ENCODE measurements at regions of chr3 and their contacts with region 1.

Region 1: DNA sequence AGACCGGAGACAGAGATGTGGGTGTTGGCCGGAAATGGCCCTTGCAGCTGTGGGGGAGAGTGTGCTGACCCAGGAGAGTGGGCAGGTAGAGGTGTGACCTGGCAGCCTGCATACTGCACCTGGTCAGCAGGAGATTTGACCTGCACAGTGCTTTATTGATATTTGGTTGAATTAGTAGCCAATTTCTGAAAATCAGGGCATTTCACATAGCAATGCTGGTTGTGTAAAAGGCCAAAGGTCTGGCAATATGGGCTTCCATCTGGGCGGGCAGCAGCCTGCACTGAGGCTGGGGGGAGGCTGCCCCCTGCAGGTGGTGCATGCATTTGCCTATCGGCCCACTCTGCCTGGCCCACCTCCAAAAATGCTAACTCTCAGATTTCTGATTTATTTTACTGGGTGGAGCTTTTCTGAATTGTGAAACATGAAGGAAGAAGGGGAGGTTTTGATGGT is 9.4 kb upstream of the MGLL start:
- DNase-seq: no peak
- H3K4me3 ChIP-seq: no peak overlapping the region
- H3K27ac ChIP-seq: no peak overlapping the region
- H3K4me1 ChIP-seq: no peaks in the 10 kb centered on the region
- H3K27me3 ChIP-seq: no peaks in the 10 kb centered on the region
- CTCF ChIP-seq: peak in 3 of 4 experiments; percentile 46 to 58 (median 48)
- POLR2A ChIP-seq: no peak

Region 2: DNA sequence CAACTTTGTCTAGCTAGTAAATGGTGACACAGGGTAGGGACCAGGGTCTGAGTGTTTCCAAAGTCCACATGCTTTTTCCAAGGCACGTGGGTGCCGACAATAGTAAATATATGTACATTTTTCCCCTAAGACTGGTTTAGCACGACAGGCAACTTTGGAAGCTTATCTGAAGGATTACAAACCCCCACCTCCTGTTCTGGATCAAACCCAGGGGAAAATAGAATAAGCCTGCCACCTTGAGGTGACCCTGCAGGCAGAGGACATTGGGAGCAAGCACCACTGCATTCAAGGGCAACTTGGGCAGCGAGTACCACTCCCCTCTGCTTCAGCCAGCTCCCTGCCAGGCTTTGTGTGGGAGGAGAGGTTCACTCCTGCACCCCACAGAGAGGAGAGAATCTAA is 128.1 kb after region 1 on chr3:
- intact Hi-C with region 1: loop called (anchors 10 kb)
- DNase-seq: peak; percentile 6
- H3K4me3 ChIP-seq: no peak overlapping the region
- H3K27ac ChIP-seq: no peak overlapping the region
- H3K4me1 ChIP-seq: no peaks in the 10 kb centered on the region
- H3K27me3 ChIP-seq: no peaks in the 10 kb centered on the region
- CTCF ChIP-seq: peak in 2 of 4 experiments; percentile 46 to 51
- POLR2A ChIP-seq: no peak